Psoas muscle (tissue), 8 donors: ENCODE measurements at regions of chr20 and their contacts with region 1.

Region 1: DNA sequence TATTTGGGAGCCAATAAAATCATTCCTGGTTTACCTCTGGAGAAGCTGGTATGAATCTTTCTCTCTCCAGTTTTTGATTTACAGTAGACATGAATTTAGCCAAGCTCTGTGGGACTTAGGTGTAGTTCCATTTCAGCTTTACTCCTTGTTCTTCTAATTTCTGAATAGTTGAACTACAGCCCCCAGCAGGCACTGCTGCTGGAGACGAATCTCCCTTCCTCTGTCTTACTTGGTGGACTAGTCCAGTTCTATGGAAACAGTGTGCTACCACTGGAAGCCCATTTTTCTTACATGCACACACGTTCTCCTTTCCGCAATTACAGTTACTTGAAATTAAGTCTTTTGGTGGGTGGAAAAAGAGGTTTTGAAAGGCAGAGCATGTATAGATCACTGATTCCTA is 42.3 kb downstream of the RALGAPB start:
- DNase-seq: no peak
- ATAC-seq: no peak
- H3K4me3 ChIP-seq: no peak overlapping the region
- H3K27ac ChIP-seq: no peak overlapping the region
- H3K4me1 ChIP-seq: no peaks in the 10 kb centered on the region
- H3K27me3 ChIP-seq: no peaks in the 10 kb centered on the region
- CTCF ChIP-seq: no peak

Region 2: DNA sequence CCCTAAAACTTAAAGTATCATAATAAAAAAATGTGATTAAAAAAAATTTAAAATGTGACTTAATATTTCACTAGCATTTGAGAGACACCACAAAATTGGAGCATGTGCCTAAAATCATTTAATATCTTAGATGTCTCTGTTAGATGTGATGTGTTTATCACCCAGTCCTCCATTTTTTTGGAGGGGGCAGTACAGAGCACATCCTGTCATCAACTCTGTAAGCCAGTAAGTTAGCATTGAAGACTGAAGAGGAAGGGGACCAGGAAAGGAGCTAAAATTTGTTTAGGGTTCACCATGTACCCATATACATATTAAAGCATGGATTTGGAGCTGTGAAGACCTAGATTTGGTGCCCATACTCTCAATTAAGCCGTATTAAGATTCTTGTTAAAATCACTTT is 35.3 kb after region 1 on chr20:
- intact Hi-C with region 1: loop called in 1 of 2 experiments (anchors 5 kb)
- DNase-seq: no peak
- ATAC-seq: no peak
- H3K4me3 ChIP-seq: no peak overlapping the region
- H3K27ac ChIP-seq: no peak overlapping the region
- H3K4me1 ChIP-seq: no peaks in the 10 kb centered on the region
- H3K27me3 ChIP-seq: no peaks in the 10 kb centered on the region
- CTCF ChIP-seq: no peak

Region 3: GRCh38 chr20:38573413-38573812 is 58.5 kb after region 1 on chr20:
- intact Hi-C with region 1: no loop called
- DNase-seq: no peak
- ATAC-seq: peak in 2 of 4 donors; percentile 42 to 51
- H3K4me3 ChIP-seq: no peak overlapping the region
- H3K27ac ChIP-seq: no peak overlapping the region
- H3K4me1 ChIP-seq: no peaks in the 10 kb centered on the region
- H3K27me3 ChIP-seq: no peaks in the 10 kb centered on the region
- CTCF ChIP-seq: no peak